Naive thymus-derived CD4-positive, alpha-beta T cell (primary cell): ENCODE measurements at regions of chr1 and their contacts with region 1.

Region 1: DNA sequence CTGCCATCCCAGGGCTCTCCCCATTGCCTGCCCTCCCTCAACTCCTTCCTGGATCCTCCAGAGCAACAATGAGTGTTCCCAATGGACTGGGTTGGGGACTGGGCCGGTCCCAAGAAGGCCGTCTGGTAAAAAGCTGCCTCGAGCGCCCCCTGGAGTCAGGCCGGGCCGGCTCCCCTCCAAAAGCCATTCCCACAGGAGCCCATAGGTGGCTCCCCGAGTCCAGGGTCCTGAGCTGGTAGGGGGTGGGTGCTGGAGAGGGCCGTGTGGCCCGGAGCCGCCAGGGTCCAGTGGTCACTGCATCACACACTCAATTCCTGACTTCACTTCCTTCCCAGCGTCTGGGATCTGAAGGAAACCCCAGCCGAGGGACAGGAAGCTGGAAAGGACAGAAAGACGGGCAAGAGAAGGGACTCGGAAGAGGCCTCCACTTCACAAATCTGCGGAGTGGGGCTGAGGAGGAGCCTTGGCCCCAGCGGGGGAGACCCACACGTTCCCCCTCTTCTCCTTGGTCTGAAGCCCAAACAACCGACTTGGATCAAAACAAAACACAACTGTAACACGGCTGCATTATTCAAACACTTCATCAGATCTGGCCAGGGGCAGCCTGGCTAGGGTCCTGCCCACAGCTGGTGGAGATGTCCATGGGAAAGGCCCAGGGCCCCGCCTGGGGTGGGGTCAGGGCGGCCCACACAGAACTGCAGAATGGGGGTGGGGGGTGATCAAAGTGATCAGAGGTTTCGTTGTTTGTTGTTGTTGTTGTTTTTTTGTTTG is 10.9 kb upstream of the ALDH4A1 start:
- DNase-seq: peak; percentile 53 to 80 (median 61)
- ATAC-seq: peak; percentile 85
- H3K4me3 ChIP-seq: no peak overlapping the region
- H3K4me3 Mint-ChIP-seq: no peak overlapping the region
- H3K27ac ChIP-seq: no peak overlapping the region
- H3K27ac Mint-ChIP-seq: peak overlapping the region in 4 of 9 donors; percentile 59 to 84 (median 77)
- H3K4me1 ChIP-seq: peaks cover 0 to 4% of the 10 kb centered on the region in 2 donors
- H3K4me1 Mint-ChIP-seq: peaks cover 2 to 15% (median 9%) of the 10 kb centered on the region in 7 donors
- H3K27me3 ChIP-seq: no peaks in the 10 kb centered on the region
- H3K27me3 Mint-ChIP-seq: no peaks in the 10 kb centered on the region

Region 2: DNA sequence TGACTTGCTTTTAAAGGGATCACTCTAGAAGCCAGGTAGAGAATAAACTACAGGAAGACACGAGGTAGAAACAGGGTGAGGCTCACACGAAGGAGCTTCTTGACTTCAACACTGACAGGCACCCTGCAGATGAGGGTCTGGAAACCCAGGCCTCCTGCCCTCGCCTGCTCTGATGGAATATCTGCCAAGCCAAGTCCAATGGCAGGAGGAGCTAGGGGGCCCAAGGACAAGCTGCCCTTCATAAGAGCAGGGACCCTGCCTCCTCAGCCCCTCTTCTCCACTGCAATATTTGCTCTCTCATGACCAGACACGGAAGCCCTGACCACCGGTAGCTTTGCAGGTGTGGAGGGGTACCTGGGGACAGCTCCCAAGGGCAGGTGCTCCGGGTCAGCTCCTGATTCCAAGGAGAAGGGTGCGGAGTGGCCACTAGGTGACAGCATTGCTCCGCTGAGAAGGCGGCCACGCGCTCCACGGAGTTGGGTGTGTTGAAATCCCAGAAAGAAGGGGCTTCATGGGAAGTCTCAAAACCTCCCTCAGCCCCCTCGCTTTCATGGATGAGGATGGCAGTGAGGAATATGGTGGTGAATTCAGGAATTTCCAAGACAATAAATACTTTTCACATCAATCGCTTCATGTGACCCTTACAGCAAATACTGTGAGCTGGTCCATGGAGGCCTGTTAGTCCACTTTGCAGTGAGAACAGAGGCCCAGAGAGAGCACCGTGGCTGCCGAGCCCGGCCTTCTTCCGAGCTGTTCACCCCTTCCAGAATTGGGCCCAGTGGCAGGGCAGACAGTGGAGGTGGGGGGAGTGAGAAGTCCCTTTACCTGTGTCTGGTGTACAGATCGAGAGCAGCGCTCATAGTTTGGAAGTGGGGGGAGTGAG is 315.8 kb before region 1 on chr1:
- CTCF ChIA-PET with region 1: no interaction called
- POLR2A ChIA-PET with region 1: no interaction called
- intact Hi-C with region 1: no loop called
- DNase-seq: peak; percentile 16 to 67 (median 52)
- ATAC-seq: peak; percentile 49
- H3K4me3 ChIP-seq: no peak overlapping the region
- H3K4me3 Mint-ChIP-seq: no peak overlapping the region
- H3K27ac ChIP-seq: no peak overlapping the region
- H3K27ac Mint-ChIP-seq: no peak overlapping the region
- H3K4me1 ChIP-seq: no peaks in the 10 kb centered on the region
- H3K4me1 Mint-ChIP-seq: peaks cover 0 to 4% (median 0%) of the 10 kb centered on the region in 7 donors
- H3K27me3 ChIP-seq: no peaks in the 10 kb centered on the region
- H3K27me3 Mint-ChIP-seq: peaks cover 12 to 48% (median 23%) of the 10 kb centered on the region in 5 donors

Region 3: DNA sequence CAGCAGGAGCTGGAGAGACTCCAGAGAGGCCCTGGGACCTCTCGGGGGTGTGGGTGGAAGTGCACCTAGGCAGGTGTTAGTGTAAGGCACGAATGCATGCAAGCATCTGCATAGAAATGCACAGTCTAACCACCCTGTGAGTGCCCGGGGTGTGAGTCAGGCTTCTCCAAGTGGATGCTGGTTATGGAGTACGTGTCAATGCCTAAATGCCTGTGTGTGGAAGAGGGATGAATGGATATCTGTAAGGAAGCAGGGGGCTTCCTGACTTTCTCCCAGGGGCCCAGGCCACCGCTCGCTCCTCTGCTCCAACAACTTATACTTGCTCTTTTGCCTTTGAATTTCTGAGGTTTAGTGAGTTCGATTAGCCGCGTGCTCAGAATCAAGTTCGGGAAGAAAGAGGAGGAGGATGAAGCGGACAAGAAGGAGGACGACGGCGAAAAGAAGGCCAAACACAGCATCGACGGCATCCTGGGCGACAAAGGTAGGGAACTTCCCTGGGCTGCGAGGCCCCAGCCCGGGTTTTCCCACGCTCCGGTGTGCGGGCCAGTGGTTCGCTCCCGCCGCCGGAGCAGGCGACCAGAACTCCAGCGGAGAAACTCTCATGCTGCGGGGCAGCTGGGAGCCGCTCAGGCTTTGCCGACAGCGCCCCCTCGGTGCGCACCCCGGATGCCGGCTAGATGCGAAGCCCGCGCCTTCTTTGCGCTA is 277.2 kb before region 1 on chr1:
- CTCF ChIA-PET with region 1: no interaction called
- POLR2A ChIA-PET with region 1: no interaction called
- intact Hi-C with region 1: no loop called
- DNase-seq: no peak
- ATAC-seq: no peak
- H3K4me3 ChIP-seq: no peak overlapping the region
- H3K4me3 Mint-ChIP-seq: peak overlapping the region in 7 of 10 donors; percentile 11 to 68 (median 33)
- H3K27ac ChIP-seq: no peak overlapping the region
- H3K27ac Mint-ChIP-seq: peak overlapping the region in 4 of 9 donors; percentile 9 to 78 (median 46)
- H3K4me1 ChIP-seq: peaks cover 0 to 14% of the 10 kb centered on the region in 2 donors
- H3K4me1 Mint-ChIP-seq: peaks cover 10 to 76% (median 54%) of the 10 kb centered on the region in 7 donors
- H3K27me3 ChIP-seq: peaks cover 6 to 65% of the 10 kb centered on the region in 2 donors
- H3K27me3 Mint-ChIP-seq: peaks cover 86 to 96% (median 92%) of the 10 kb centered on the region in 5 donors

Region 4: DNA sequence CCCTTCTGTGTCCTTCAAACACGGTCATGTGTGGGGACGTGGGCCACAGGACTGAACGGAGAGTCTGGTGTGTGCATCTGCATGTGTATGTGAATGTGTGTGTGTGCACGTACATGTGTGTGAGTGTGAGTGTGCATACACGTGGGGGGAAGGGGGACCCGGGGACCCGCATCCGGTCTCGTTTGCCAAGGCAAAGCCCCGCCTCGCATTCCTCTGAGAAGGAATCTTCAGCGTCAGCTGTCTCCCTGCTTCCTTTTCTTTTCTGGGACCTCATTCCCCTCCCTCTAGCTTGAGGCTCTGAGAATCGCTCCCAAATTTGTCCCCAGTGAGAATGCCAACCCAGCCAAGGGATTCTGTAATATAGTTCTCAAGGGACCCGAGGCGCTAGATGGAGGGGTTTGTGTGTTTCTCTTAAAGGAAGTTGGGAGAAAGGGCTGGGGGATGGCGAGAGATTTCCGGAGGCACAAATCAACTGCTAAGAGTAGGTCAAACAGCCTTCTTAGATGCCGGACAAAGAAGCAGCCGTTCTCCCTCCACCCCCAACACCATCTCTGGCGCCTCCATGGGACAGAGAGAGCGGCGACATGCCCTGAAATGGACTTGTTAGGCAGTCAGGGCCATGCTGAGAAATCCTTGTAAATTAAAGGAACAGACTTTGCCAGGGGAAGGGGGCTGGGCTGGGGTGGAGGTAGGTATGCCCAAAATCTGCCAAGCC is 36.6 kb after region 1 on chr1:
- CTCF ChIA-PET with region 1: interaction called, 14 read pairs
- POLR2A ChIA-PET with region 1: interaction called, 6 read pairs
- intact Hi-C with region 1: no loop called
- DNase-seq: peak in 3 of 9 donors; percentile 19 to 35 (median 32)
- ATAC-seq: no peak
- H3K4me3 ChIP-seq: peak overlapping the region; percentile 50
- H3K4me3 Mint-ChIP-seq: peak overlapping the region; percentile 82 to 94 (median 90)
- H3K27ac ChIP-seq: peak overlapping the region; percentile 98
- H3K27ac Mint-ChIP-seq: peak overlapping the region; percentile 91 to 99 (median 98)
- H3K4me1 ChIP-seq: peaks cover 95 to 99% of the 10 kb centered on the region in 2 donors
- H3K4me1 Mint-ChIP-seq: peaks cover 83 to 98% (median 93%) of the 10 kb centered on the region in 7 donors
- H3K27me3 ChIP-seq: no peaks in the 10 kb centered on the region
- H3K27me3 Mint-ChIP-seq: peaks cover 0 to 2% (median 0%) of the 10 kb centered on the region in 5 donors

Region 5: DNA sequence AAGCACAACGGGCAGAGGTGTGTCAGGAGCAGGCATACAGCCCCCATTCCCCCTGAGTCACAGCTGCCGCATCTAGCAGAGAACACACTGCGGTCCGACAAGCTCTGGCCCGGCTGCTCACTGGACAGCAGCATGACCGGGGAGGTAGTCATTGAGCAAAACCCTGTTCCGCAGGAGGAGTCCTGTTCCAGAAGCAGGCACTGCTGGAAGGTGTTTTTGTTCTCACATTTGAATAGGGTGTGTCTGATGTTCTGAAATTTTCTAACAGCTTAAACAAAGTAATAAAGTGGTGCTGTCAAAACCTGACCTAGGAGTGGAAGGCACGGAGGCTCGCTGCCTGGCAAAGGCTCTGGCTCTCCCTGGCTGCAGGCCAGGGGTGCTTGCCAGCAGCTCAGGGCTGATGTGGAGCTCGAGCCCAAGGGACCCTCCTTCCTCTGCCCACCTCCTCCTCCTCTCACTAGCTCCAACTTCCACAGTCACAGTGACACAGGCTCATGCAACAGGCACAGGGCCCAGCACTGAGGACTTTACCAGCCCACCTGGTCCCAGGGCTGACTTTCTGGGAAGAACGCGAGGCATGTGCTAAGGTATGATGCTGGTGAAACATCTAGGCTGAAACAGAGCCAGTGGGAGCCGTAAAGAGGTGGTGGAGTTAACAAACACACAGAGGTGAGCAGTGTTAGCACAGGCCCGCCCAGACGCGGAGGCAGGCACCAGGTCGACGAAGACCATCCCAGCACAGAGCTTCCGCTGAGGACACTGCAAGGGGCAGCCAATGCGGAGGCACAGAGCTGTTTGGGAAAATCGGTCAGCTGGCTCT is 161.9 kb after region 1 on chr1:
- CTCF ChIA-PET with region 1: interaction called, 18 read pairs
- POLR2A ChIA-PET with region 1: no interaction called
- intact Hi-C with region 1: no loop called
- DNase-seq: peak in 1 of 9 donors; percentile 10
- ATAC-seq: peak; percentile 19
- H3K4me3 ChIP-seq: peak overlapping the region; percentile 41
- H3K4me3 Mint-ChIP-seq: peak overlapping the region; percentile 45 to 82 (median 72)
- H3K27ac ChIP-seq: peak overlapping the region; percentile 18
- H3K27ac Mint-ChIP-seq: peak overlapping the region; percentile 32 to 93 (median 76)
- H3K4me1 ChIP-seq: peaks cover 32 to 52% of the 10 kb centered on the region in 2 donors
- H3K4me1 Mint-ChIP-seq: peaks cover 30 to 69% (median 60%) of the 10 kb centered on the region in 7 donors
- H3K27me3 ChIP-seq: no peaks in the 10 kb centered on the region
- H3K27me3 Mint-ChIP-seq: no peaks in the 10 kb centered on the region